ENCODE measurements at regions of chr13 and their contacts with region 1.

Region 1: GRCh38 chr13:110239280-110240125 is 67.5 kb downstream of the COL4A1 start:
- DNase-seq: no peak
- H3K4me3 ChIP-seq: no peak overlapping the region
- H3K27ac ChIP-seq: peak overlapping the region; percentile 71 to 97 (median 82)
- H3K4me1 ChIP-seq: peaks cover 0 to 86% (median 75%) of the 10 kb centered on the region in 4 donors
- H3K27me3 ChIP-seq: no peaks in the 10 kb centered on the region
- CTCF ChIP-seq: no peak
- EP300 ChIP-seq: no peak
- POLR2A ChIP-seq: no peak

Region 2: DNA sequence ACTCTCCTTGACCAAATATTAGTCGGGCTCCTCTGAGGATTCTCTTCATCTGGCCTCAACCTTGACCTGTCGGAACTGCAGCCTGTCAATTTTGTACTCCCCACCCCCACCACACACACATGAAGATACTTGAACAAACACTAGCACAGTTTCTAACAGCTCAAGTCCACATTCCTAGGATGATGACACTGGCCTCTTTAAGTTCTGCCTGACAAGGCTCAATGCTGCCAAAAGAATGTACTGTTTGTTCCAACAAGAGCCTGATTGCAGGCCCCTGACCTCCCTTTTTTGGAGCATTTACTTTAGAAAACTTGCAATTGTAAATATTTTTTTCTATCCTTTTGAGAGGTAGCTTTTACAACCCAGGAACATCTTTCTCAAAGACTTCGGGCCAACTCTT is 283.9 kb before region 1 on chr13:
- intact Hi-C with region 1: no loop called
- DNase-seq: no peak
- H3K4me3 ChIP-seq: no peak overlapping the region
- H3K27ac ChIP-seq: no peak overlapping the region
- H3K4me1 ChIP-seq: peaks cover 0 to 9% (median 3%) of the 10 kb centered on the region in 4 donors
- H3K27me3 ChIP-seq: no peaks in the 10 kb centered on the region
- CTCF ChIP-seq: no peak
- EP300 ChIP-seq: no peak
- POLR2A ChIP-seq: no peak

Region 3: GRCh38 chr13:110294146-110294545 is 54.6 kb after region 1 on chr13:
- intact Hi-C with region 1: loop called (anchors 5 kb)
- DNase-seq: peak; percentile 67
- H3K4me3 ChIP-seq: no peak overlapping the region
- H3K27ac ChIP-seq: peak overlapping the region; percentile 18 to 100 (median 80)
- H3K4me1 ChIP-seq: peaks cover 0 to 97% (median 85%) of the 10 kb centered on the region in 4 donors
- H3K27me3 ChIP-seq: no peaks in the 10 kb centered on the region
- CTCF ChIP-seq: no peak
- EP300 ChIP-seq: no peak
- POLR2A ChIP-seq: no peak

Measured in sigmoid colon (tissue), 7 donors.